ENCODE measurements at regions of chr15 and their contacts with region 1.

Region 1: GRCh38 chr15:44058126-44058525 is 136.9 kb downstream of the FRMD5 start:
- DNase-seq: no peak
- H3K4me3 ChIP-seq: no peak overlapping the region
- H3K4me3 Mint-ChIP-seq: no peak overlapping the region
- H3K27ac ChIP-seq: no peak overlapping the region
- H3K27ac Mint-ChIP-seq: no peak overlapping the region
- H3K4me1 ChIP-seq: no peaks in the 10 kb centered on the region
- H3K4me1 Mint-ChIP-seq: no peaks in the 10 kb centered on the region
- H3K27me3 ChIP-seq: peaks cover 6 to 16% of the 10 kb centered on the region in 2 donors
- H3K27me3 Mint-ChIP-seq: peaks cover 18 to 40% (median 32%) of the 10 kb centered on the region in 3 donors
- CTCF ChIP-seq: no peak

Region 2: GRCh38 chr15:43998607-43999006 is 59.5 kb before region 1 on chr15:
- intact Hi-C with region 1: loop called in 1 of 2 experiments (anchors 10 kb)
- DNase-seq: no peak
- H3K4me3 ChIP-seq: no peak overlapping the region
- H3K4me3 Mint-ChIP-seq: no peak overlapping the region
- H3K27ac ChIP-seq: no peak overlapping the region
- H3K27ac Mint-ChIP-seq: no peak overlapping the region
- H3K4me1 ChIP-seq: no peaks in the 10 kb centered on the region
- H3K4me1 Mint-ChIP-seq: peaks cover 1% of the 10 kb centered on the region
- H3K27me3 ChIP-seq: no peaks in the 10 kb centered on the region
- H3K27me3 Mint-ChIP-seq: peaks cover 5% of the 10 kb centered on the region in 3 donors
- CTCF ChIP-seq: no peak

Region 3: GRCh38 chr15:44157685-44158099 is 99.6 kb after region 1 on chr15:
- intact Hi-C with region 1: no loop called
- DNase-seq: no peak
- H3K4me3 ChIP-seq: no peak overlapping the region
- H3K4me3 Mint-ChIP-seq: no peak overlapping the region
- H3K27ac ChIP-seq: no peak overlapping the region
- H3K27ac Mint-ChIP-seq: no peak overlapping the region
- H3K4me1 ChIP-seq: no peaks in the 10 kb centered on the region
- H3K4me1 Mint-ChIP-seq: no peaks in the 10 kb centered on the region
- H3K27me3 ChIP-seq: peaks cover 0 to 6% of the 10 kb centered on the region in 2 donors
- H3K27me3 Mint-ChIP-seq: peaks cover 1 to 19% (median 8%) of the 10 kb centered on the region in 3 donors
- CTCF ChIP-seq: no peak

Measured in CD14-positive monocyte (primary cell).